HAP-1 (cell line): ENCODE measurements at regions of chr12 and their contacts with region 1.

Region 1: DNA sequence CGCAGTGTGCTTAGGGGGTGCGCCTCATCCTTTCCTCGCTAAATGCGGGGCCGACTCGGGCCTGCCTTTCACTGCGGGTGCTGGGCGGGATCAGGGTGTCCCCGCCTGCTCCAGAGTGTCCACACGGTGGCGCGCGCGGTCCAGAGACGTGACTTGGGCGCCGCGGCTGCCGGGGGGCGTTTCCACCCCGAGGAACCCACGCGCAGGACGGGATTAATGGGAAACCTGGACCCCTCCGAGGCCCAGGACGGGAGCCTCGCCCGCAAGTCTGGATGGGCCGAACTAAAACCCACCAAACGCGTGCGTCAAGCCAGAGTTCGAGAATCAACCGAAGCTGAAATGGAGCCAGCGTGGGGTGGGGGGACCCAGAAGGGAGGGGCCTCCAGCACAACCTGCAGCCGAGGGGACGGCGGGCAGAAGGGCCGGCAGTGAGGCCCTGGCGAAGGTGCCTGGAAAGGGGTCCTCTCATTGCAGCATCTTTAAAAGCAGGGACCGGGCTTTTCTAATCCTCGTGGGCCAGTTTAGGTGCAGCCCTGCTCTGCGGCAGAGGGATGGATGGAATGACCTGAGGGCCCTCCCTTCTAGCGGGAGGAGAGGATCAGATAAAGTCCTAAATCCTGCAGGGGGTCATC is 93.3 kb downstream of the NINJ2 start:
- DNase-seq: peak; percentile 67 to 93
- H3K4me3 ChIP-seq: peak overlapping the region; percentile 35
- H3K4me1 ChIP-seq: peaks cover 23% of the 10 kb centered on the region
- H3K27me3 ChIP-seq: no peaks in the 10 kb centered on the region

Region 2: DNA sequence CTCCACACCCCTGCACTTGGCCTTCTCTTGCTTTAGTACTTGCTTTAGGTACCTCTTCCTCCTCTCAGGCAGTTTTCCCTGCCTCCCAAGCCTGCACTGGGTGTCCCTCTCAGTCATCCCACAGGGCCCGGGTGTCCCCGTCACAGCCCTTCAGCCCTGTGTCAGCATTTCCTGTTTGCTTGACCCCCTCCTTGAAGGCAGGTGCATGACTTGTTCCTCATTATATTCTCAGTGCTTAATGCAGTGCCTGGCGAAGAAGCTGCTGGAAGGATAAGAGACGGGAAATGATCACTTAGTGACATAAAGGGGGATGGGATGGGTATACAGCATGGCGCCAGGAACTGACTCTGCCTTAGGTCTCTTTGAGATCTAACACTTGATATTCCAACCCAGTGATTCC is 441.8 kb before region 1 on chr12:
- in situ Hi-C with region 1: no loop called
- DNase-seq: no peak
- H3K4me3 ChIP-seq: no peak overlapping the region
- H3K4me1 ChIP-seq: no peaks in the 10 kb centered on the region
- H3K27me3 ChIP-seq: peaks cover 16% of the 10 kb centered on the region

Region 3: DNA sequence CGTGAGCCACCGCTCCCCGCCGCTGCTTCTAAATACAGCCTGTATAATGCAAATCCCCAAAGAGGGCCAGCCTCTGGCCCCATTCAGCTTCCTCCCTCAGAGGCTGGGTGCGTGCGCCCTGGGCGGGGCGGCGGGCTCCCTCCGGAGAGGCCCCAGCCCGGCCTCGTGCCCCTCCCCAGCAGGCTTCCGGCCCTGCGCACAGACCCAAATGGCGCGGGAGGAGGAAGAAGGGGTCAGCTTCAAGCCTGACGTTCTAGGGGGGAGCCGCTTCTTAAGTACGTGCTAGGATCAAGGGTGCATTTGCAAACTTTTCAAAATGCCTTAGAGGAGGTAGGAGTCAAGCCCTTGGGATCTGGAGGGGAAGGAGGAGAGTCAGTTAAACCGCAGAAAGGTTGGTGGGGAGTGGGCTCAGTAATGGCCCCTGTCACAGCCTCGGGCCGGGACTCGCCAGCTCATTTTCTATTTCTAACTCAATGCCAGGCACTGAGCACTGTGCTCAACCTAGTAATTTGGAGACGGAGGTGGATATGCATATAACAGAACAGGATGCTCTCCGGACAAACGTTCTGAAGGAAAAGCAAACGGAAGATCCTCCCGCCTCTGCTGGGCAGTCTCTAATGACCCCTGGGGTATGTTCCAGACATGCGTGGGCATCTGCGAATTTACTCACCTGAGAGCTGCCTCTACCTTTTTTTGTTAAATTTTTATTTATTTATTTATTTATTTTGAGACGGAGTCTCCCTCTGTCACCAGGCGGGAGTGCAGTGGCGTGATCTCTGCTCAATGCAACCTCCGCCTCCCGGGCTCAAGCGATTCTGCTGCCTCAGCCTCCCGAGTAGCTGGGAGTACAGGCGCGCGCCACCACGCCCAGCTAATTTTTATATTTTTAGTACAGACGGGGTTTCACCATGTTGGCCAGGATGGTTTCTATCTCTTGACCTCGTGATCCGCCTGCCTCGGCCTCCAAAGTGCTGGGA is 61.0 kb after region 1 on chr12:
- in situ Hi-C with region 1: no loop called
- DNase-seq: no peak
- H3K4me3 ChIP-seq: no peak overlapping the region
- H3K4me1 ChIP-seq: peaks cover 13% of the 10 kb centered on the region
- H3K27me3 ChIP-seq: no peaks in the 10 kb centered on the region

Region 4: DNA sequence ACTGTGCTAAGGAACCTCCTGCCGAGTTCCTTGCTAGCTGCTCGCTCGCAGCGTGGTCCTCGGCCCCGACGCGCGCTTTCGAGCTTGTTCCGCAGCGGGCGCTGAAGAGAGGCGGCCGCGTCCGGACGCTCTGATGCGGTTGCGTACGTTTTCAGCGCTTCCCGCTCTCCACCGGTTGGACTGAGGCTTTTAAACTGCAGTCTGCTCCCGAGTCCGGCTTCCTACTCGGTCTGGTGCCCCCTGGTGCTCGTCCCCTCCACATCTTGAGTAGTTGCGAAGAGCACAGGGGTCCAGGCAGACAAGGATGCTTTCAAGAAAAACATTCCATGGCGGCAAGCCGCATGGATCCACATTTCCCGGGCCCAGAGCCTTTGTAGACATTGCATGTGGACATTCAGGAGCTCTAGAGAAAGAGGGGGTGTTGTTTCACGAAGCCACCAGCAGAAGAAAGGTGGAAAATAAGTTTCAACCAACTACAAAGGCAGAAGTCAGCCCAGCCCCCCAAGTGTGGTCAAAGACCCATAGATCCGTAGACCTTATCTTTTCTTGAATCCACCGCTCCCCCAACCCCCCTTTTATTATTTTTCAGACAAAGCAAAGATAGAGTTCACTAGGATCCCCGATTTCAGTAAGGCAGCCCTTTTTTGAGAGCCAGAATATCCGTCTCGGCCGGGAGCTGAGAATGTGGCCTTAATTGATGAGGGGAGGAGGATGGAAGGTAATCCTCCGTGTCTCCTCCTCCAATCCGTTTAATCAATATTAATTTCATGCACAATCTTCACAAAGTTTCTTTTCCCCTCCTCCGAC is 181.5 kb after region 1 on chr12:
- in situ Hi-C with region 1: loop called (anchors 5 kb)
- DNase-seq: peak; percentile 94 to 96
- H3K4me3 ChIP-seq: peak overlapping the region; percentile 20
- H3K4me1 ChIP-seq: peaks cover 17% of the 10 kb centered on the region
- H3K27me3 ChIP-seq: no peaks in the 10 kb centered on the region

Region 5: DNA sequence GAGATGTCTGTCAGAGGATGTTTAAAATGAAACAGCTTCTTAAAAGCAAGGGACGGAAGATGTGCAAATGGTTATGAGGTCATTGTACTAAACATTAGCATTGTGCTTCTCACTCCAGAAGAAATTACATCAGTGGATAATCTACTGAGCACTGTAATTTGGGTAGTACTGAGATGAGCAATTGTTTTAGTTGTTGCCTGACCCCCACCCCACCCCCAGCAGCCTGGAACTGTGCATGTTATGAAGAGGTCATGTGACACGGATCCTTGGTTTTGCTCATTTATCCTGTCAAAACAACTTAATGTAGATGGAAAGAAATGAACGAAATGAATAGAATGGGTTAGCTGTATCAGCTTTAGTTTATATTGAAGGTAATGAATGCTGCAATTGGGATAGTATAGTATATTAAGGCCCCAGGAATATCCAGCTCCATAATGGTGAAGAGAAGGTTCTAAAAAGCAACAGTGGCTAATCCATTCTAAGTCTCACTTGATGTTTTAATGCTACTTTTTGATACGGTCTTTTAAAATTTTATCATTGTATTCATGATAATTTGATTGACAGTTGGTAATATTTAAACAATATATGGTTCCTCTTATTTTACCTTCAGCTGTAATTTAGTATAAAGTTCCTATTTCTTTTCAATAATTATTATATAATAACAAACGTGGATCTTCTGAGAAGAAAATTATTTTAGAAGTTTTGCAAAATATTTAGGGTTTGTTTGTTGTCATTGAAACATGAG is 240.9 kb after region 1 on chr12:
- in situ Hi-C with region 1: loop called (anchors 5 kb)
- DNase-seq: no peak
- H3K4me3 ChIP-seq: no peak overlapping the region
- H3K4me1 ChIP-seq: peaks cover 24% of the 10 kb centered on the region
- H3K27me3 ChIP-seq: no peaks in the 10 kb centered on the region

Region 6: GRCh38 chr12:1093166-1093751 is 523.3 kb after region 1 on chr12:
- in situ Hi-C with region 1: loop called (anchors 10 kb)
- DNase-seq: peak; percentile 68 to 80
- H3K4me3 ChIP-seq: no peak overlapping the region
- H3K4me1 ChIP-seq: peaks cover 11% of the 10 kb centered on the region
- H3K27me3 ChIP-seq: no peaks in the 10 kb centered on the region

Region 7: GRCh38 chr12:1594261-1595025 is 1024.5 kb after region 1 on chr12 and contains the start of gene FBXL14:
- in situ Hi-C with region 1: loop called (anchors 25 kb)
- DNase-seq: peak; percentile 80 to 94
- H3K4me3 ChIP-seq: peak within 1 kb of the TSS; percentile 59
- H3K4me1 ChIP-seq: peaks cover 35% of the 10 kb centered on the region
- H3K27me3 ChIP-seq: no peaks in the 10 kb centered on the region